Activated CD4-positive, alpha-beta memory T cell treated with anti-CD3 and anti-CD28 coated beads, Interleukin-2, amount 10 ng/mL, durations not matched to agents 7 days and 5 days (primary cell): ENCODE measurements at regions of chr16 and their contacts with region 1.

Region 1: GRCh38 chr16:27235055-27235937 is 32.0 kb downstream of the KDM8 start:
- DNase-seq: peak; percentile 96
- H3K4me3 Mint-ChIP-seq: peak overlapping the region; percentile 67
- H3K27ac Mint-ChIP-seq: peak overlapping the region; percentile 100
- H3K4me1 Mint-ChIP-seq: peaks cover 98% of the 10 kb centered on the region
- H3K27me3 Mint-ChIP-seq: no peaks in the 10 kb centered on the region

Region 2: DNA sequence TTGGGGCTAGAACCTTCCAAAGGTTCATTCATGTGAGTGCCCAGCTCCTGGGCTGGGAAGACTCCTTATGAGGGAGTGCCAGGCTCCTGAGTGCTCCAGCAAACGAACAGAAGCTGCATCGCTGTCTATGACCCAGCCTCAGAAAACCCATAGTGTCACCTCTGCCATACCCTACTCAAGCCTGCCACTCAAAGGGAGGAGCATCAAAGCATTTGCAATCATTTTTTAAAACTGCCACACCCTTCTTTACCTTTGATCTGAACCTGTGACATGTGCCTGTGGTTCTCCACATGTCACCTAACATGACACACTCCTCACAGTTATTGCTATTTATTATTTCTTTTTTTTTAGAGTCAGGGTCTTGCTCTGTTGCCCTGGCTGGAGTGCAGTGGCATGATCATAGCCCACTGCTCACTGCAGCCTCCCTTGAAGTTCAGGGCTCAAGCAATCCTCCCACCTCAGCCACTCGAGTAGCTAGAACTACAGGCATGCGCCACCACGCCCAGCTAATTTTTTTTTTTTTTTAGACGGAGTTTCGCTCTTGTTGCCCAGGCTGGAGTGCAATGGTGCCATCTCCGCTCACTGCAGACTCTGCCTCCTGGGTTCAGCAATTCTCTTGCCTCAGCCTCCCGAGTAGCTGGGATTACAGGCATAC is 39.2 kb before region 1 on chr16:
- CTCF ChIA-PET with region 1: interaction called, 14 read pairs
- POLR2A ChIA-PET with region 1: interaction called, 51 read pairs
- DNase-seq: peak; percentile 41
- H3K4me3 Mint-ChIP-seq: no peak overlapping the region
- H3K27ac Mint-ChIP-seq: peak overlapping the region; percentile 82
- H3K4me1 Mint-ChIP-seq: peaks cover 62% of the 10 kb centered on the region
- H3K27me3 Mint-ChIP-seq: no peaks in the 10 kb centered on the region

Region 3: GRCh38 chr16:27248036-27248435 is 12.7 kb after region 1 on chr16:
- CTCF ChIA-PET with region 1: interaction called, 14 read pairs
- POLR2A ChIA-PET with region 1: interaction called, 114 read pairs
- DNase-seq: no peak
- H3K4me3 Mint-ChIP-seq: no peak overlapping the region
- H3K27ac Mint-ChIP-seq: no peak overlapping the region
- H3K4me1 Mint-ChIP-seq: peaks cover 75% of the 10 kb centered on the region
- H3K27me3 Mint-ChIP-seq: no peaks in the 10 kb centered on the region

Region 4: DNA sequence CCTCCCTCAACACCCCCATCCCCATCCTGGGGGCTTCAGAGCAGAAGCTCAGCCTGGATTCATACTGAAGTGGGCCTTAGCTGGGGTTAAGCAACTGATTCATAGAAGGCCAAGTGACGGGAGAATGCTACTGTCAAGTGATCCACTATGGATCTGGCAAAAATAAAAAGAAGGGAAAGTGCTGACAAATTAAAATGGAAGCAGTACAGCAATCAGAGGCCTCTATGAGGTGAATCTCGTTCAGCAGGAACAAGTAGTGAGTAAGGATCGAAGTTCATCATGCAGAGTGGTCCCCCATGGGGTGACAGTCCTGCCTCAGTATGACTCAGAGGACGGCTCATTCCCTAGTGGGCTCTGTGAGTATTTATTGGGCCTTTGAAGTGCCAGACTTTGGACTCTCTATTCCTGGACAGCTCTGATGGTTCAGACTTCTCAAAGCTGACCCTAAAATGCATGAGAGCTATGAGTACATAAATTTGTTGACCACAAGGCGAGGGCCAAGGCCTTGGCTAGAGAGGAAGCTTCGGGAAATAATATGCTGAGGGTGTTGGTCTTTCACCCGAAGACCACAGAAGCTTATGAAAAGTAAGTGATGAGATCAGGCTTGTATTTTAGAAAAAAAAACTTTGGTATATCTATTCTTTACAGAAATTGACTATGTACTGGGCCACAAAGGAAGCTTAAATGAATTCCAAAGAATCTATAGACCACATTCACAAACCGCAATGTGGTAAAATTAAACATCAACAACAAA is 38.6 kb after region 1 on chr16:
- CTCF ChIA-PET with region 1: interaction called, 74 read pairs
- POLR2A ChIA-PET with region 1: interaction called, 243 read pairs
- DNase-seq: peak; percentile 29
- H3K4me3 Mint-ChIP-seq: no peak overlapping the region
- H3K27ac Mint-ChIP-seq: peak overlapping the region; percentile 90
- H3K4me1 Mint-ChIP-seq: peaks cover 62% of the 10 kb centered on the region
- H3K27me3 Mint-ChIP-seq: peaks cover 12% of the 10 kb centered on the region

Region 5: GRCh38 chr16:27318392-27319226 is 83.3 kb after region 1 on chr16:
- CTCF ChIA-PET with region 1: interaction called, 146 read pairs
- POLR2A ChIA-PET with region 1: interaction called, 448 read pairs
- DNase-seq: peak; percentile 72
- H3K4me3 Mint-ChIP-seq: peak overlapping the region; percentile 97
- H3K27ac Mint-ChIP-seq: peak overlapping the region; percentile 98
- H3K4me1 Mint-ChIP-seq: peaks cover 75% of the 10 kb centered on the region
- H3K27me3 Mint-ChIP-seq: no peaks in the 10 kb centered on the region

Region 6: DNA sequence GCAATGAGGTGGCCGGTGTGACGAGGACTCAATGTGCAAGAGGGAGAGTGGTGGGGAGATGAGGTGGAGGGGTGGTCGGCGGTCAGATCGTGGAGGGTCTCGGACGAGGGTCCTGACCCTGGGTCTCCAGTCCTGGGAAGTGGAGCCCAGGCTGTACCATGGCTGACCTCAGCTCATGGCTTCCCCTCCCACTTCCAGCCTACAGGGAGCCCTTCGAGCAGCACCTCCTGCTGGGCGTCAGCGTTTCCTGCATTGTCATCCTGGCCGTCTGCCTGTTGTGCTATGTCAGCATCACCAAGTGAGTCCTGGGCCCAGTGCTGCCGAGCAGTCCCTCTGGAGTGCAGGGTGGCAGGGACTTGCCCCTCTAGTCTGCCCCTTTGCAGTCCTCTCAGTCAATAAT is 120.3 kb after region 1 on chr16:
- CTCF ChIA-PET with region 1: interaction called, 22 read pairs
- POLR2A ChIA-PET with region 1: interaction called, 11 read pairs
- DNase-seq: peak; percentile 49
- H3K4me3 Mint-ChIP-seq: no peak overlapping the region
- H3K27ac Mint-ChIP-seq: no peak overlapping the region
- H3K4me1 Mint-ChIP-seq: peaks cover 13% of the 10 kb centered on the region
- H3K27me3 Mint-ChIP-seq: no peaks in the 10 kb centered on the region

Region 7: DNA sequence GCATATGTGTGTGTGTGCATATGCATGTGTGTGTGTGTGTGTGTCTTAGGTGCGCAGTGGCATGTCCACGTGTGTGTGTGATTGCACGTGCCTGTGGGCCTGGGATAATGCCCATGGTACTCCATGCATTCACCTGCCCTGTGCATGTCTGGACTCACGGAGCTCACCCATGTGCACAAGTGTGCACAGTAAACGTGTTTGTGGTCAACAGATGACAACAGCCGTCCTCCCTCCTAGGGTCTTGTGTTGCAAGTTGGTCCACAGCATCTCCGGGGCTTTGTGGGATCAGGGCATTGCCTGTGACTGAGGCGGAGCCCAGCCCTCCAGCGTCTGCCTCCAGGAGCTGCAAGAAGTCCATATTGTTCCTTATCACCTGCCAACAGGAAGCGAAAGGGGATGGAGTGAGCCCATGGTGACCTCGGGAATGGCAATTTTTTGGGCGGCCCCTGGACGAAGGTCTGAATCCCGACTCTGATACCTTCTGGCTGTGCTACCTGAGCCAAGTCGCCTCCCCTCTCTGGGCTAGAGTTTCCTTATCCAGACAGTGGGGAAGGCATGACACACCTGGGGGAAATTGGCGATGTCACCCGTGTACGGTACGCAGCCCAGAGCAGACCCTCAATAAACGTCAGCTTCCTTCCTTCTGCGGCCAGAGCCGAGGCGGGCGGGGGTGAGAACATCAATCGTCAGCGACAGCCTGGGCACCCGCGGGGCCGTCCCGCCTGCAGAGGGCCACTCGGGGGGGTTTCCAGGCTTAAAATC is 214.3 kb after region 1 on chr16:
- CTCF ChIA-PET with region 1: interaction called, 6 read pairs
- POLR2A ChIA-PET with region 1: interaction called, 18 read pairs
- DNase-seq: peak; percentile 56
- H3K4me3 Mint-ChIP-seq: peak overlapping the region; percentile 18
- H3K27ac Mint-ChIP-seq: peak overlapping the region; percentile 50
- H3K4me1 Mint-ChIP-seq: peaks cover 62% of the 10 kb centered on the region
- H3K27me3 Mint-ChIP-seq: no peaks in the 10 kb centered on the region